Panc1 (cell line): ENCODE measurements at regions of chr7 and their contacts with region 1.

Region 1: DNA sequence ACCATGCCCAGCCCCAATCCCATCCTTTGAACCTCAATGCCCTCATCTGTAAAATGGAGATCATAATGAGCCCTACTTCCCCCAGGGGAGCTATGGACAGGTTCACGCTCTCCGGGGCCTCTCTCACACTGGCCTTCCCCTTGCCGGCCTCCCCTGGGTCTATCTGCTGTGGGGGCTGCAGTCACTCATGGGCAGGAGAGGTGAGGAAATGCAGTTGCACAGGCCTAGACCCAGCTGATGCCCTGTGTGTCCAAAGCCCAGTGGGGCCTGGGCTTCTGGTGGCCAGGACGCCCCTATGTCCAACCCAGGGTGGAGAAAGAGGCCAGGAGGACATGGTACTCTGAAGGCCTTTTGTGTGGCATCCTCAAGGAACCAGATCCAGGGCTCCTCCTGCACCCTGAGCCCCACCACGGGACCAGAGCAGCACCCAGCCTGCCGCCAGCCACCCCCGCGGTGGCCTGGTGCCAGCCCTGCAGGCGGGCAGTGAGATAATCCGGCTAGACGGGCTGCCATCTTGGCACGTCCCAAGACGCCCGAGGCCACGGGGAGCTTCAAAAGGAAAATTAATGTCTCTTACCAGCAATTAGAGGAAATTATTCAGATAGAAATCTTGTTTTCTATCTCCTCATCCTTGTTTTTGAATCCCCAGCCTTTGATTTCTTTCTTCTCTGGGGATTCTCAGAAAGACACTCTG is 39.0 kb downstream of the MYL10 start:
- DNase-seq: no peak
- ATAC-seq: no peak
- H3K4me3 ChIP-seq: no peak overlapping the region
- H3K27ac ChIP-seq: no peak overlapping the region
- H3K4me1 ChIP-seq: no peaks in the 10 kb centered on the region
- H3K27me3 ChIP-seq: no peaks in the 10 kb centered on the region
- CTCF ChIP-seq: no peak

Region 2: GRCh38 chr7:101575168-101575567 is 15.0 kb before region 1 on chr7:
- CTCF ChIA-PET with region 1: no interaction called
- POLR2A ChIA-PET with region 1: no interaction called
- in situ Hi-C with region 1: no loop called
- intact Hi-C with region 1: no loop called
- DNase-seq: no peak
- ATAC-seq: no peak
- H3K4me3 ChIP-seq: no peak overlapping the region
- H3K27ac ChIP-seq: no peak overlapping the region
- H3K4me1 ChIP-seq: no peaks in the 10 kb centered on the region
- H3K27me3 ChIP-seq: no peaks in the 10 kb centered on the region
- CTCF ChIP-seq: no peak

Region 3: GRCh38 chr7:101784292-101785127 is 194.4 kb after region 1 on chr7:
- CTCF ChIA-PET with region 1: no interaction called
- POLR2A ChIA-PET with region 1: no interaction called
- in situ Hi-C with region 1: no loop called
- intact Hi-C with region 1: no loop called
- DNase-seq: no peak
- ATAC-seq: peak; percentile 51; the same call in 1 of the 2 replicates
- H3K4me3 ChIP-seq: no peak overlapping the region
- H3K27ac ChIP-seq: no peak overlapping the region
- H3K4me1 ChIP-seq: no peaks in the 10 kb centered on the region
- H3K27me3 ChIP-seq: no peaks in the 10 kb centered on the region
- CTCF ChIP-seq: no peak

Region 4: GRCh38 chr7:101900103-101900502 is 310.0 kb after region 1 on chr7:
- CTCF ChIA-PET with region 1: no interaction called
- POLR2A ChIA-PET with region 1: interaction called, 10 read pairs
- in situ Hi-C with region 1: no loop called
- intact Hi-C with region 1: no loop called
- DNase-seq: no peak
- ATAC-seq: no peak
- H3K4me3 ChIP-seq: no peak overlapping the region
- H3K27ac ChIP-seq: no peak overlapping the region
- H3K4me1 ChIP-seq: 0 out of 2 replicates have a peak, but pooled peaks cover 4% of the 10 kb centered on the region
- H3K27me3 ChIP-seq: no peaks in the 10 kb centered on the region
- CTCF ChIP-seq: no peak